ENCODE measurements at regions of chr20 and their contacts with region 1.

Region 1: DNA sequence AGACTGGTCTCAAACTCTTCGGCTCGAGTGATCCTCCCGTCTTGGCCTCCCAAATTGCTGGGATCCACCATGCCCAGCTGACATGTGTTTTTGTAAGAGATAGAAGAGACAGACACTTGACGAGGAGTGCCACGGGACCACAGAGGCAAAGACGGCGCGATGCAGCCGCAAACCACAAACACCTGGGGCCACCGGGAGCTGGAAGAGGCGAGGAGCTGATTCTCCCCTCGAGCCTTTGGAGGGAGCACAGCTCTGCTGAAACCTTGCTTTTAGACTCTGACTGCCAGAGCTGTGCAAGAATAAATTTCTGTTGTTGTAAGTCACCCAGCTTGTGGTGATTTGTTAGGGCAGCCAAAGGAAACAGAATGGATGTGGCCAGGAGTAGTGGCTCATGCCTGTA is 46.9 kb downstream of the TFAP2C start:
- DNase-seq: no peak
- CTCF ChIP-seq: no peak

Region 2: DNA sequence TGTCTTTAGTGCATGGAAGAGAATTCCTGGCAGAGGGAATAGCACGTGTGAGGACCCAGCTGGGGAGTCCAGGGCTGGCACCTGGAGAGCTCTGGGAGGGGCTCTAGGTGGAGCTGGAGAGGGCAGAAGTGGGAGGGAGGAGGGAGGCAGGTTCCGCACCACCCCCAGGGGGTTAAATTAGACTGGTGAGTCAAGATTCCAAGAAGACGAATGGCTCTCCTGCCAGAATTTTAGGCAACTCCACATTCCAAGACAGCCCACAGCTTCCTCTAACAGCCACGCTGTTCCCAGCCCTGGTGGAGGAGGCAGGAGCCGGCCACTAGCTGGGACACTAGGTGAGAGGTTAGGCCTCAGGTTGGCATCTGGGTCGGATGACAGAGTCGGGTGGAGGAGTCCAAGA is 13.3 kb after region 1 on chr20:
- CTCF ChIA-PET with region 1: interaction called, 11 read pairs
- POLR2A ChIA-PET with region 1: no interaction called
- DNase-seq: no peak
- CTCF ChIP-seq: no peak